ENCODE measurements at regions of chr1 and their contacts with region 1.

Region 1: DNA sequence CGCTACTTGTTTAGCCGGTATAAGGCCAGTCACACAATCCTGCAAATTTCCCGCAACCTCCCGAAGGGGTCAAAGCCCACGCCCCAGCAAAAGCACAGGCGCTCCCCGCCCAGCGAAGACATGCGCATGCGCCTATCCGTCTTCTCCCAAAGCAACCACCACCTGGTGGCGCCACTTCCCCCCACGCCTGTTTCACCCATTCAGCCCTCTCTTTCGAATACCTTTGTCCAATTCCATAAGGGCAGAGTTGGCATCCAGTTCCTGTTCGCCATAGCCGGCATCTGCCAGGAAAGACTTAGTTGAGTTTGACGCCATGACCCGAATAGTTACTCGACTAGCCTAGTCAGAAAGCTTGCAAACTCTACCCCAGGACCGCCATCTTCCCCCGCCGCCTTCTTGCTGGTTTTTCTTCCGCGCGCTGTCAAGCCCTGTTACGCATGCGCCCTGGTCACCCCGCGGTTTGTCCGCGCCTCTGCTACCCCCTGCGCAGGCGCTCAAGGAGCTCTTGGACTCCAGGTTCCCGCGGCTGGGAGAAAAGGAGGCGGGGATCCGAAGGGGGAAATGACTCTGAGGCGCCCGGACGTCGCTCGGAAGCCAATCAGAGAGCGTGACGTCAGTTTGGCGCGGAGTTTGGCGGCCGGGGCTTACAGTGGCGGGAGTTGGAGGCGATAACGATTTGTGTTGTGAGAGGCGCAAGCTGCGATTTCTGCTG is at the starts of genes DTL and INTS7:
- DNase-seq: peak; percentile 95 to 100 (median 98)
- ATAC-seq: peak; percentile 90
- H3K4me3 ChIP-seq: peak within 1 kb of the TSS; percentile 77 to 98
- H3K4me3 Mint-ChIP-seq: peak within 1 kb of the TSS; percentile 99
- H3K27ac ChIP-seq: peak within 1 kb of the TSS; percentile 75 to 82
- H3K27ac Mint-ChIP-seq: peak within 1 kb of the TSS; percentile 98
- H3K4me1 ChIP-seq: peaks cover 19% of the 10 kb centered on the region
- H3K4me1 Mint-ChIP-seq: peaks cover 47% of the 10 kb centered on the region
- H3K27me3 ChIP-seq: no peaks in the 10 kb centered on the region
- H3K27me3 Mint-ChIP-seq: no peaks in the 10 kb centered on the region
- CTCF ChIP-seq: peak; percentile 93
- total RNA-seq, gene DTL: 1.0 to 1.2 TPM
- total RNA-seq, gene INTS7: 2.4 to 3.3 TPM

Region 2: GRCh38 chr1:211183747-211184313 is 851.4 kb before region 1 on chr1:
- CTCF ChIA-PET with region 1: no interaction called
- POLR2A ChIA-PET with region 1: no interaction called
- intact Hi-C with region 1: no loop called
- DNase-seq: no peak
- ATAC-seq: no peak
- H3K4me3 ChIP-seq: no peak overlapping the region
- H3K4me3 Mint-ChIP-seq: no peak overlapping the region
- H3K27ac ChIP-seq: no peak overlapping the region
- H3K27ac Mint-ChIP-seq: no peak overlapping the region
- H3K4me1 ChIP-seq: no peaks in the 10 kb centered on the region
- H3K4me1 Mint-ChIP-seq: no peaks in the 10 kb centered on the region
- H3K27me3 ChIP-seq: no peaks in the 10 kb centered on the region
- H3K27me3 Mint-ChIP-seq: peaks cover 10% of the 10 kb centered on the region
- CTCF ChIP-seq: no peak

Region 3: GRCh38 chr1:211578640-211579433 is 456.4 kb before region 1 on chr1 and contains the start of gene SLC30A1:
- CTCF ChIA-PET with region 1: no interaction called
- POLR2A ChIA-PET with region 1: no interaction called
- intact Hi-C with region 1: loop called (anchors 1 to 5 kb)
- DNase-seq: peak; percentile 98 to 100 (median 99)
- ATAC-seq: peak; percentile 92
- H3K4me3 ChIP-seq: peak within 1 kb of the TSS; percentile 84 to 93
- H3K4me3 Mint-ChIP-seq: peak within 1 kb of the TSS; percentile 93
- H3K27ac ChIP-seq: peak within 1 kb of the TSS; percentile 56 to 59
- H3K27ac Mint-ChIP-seq: peak within 1 kb of the TSS; percentile 95
- H3K4me1 ChIP-seq: peaks cover 33% of the 10 kb centered on the region
- H3K4me1 Mint-ChIP-seq: peaks cover 51% of the 10 kb centered on the region
- H3K27me3 ChIP-seq: no peaks in the 10 kb centered on the region
- H3K27me3 Mint-ChIP-seq: no peaks in the 10 kb centered on the region
- CTCF ChIP-seq: no peak
- total RNA-seq, gene SLC30A1: 9.7 to 9.8 TPM

Region 4: GRCh38 chr1:211698161-211699026 is 336.9 kb before region 1 on chr1:
- CTCF ChIA-PET with region 1: interaction called, 21 read pairs
- POLR2A ChIA-PET with region 1: no interaction called
- intact Hi-C with region 1: no loop called
- DNase-seq: peak; percentile 70 to 90 (median 82)
- ATAC-seq: peak; percentile 96
- H3K4me3 ChIP-seq: peak overlapping the region; percentile 18 to 34
- H3K4me3 Mint-ChIP-seq: peak overlapping the region; percentile 76
- H3K27ac ChIP-seq: no peak overlapping the region
- H3K27ac Mint-ChIP-seq: no peak overlapping the region
- H3K4me1 ChIP-seq: peaks cover 30% of the 10 kb centered on the region
- H3K4me1 Mint-ChIP-seq: peaks cover 42% of the 10 kb centered on the region
- H3K27me3 ChIP-seq: no peaks in the 10 kb centered on the region
- H3K27me3 Mint-ChIP-seq: no peaks in the 10 kb centered on the region
- CTCF ChIP-seq: peak; percentile 99

Region 5: DNA sequence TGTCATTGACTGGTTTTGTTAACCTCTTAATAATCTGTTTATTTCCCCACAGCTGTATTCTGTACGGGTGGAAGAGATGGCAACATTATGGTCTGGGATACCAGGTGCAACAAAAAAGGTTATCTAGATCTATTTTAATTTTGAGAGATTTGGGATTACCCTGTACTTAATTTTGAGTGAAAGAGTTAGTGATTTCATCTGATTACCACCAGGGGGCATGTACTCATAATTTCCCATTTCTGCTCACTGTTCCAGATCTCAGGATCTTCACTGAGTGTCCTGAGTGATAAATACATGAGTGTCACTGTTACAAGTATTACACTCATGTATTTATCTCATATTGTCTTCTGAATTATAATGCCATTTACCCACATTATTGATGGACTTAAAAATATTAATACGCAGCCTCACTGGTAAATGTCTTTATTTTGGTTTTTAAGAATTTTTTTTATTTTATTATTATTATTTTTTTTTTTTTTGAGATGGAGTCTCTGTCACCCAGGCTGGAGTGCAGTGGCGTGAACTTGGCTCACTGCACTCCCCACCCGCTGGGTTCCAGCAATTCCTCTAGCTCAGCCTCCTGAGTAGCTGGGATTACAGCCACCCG is 27.7 kb after region 1 on chr1:
- CTCF ChIA-PET with region 1: interaction called, 15 read pairs
- POLR2A ChIA-PET with region 1: no interaction called
- intact Hi-C with region 1: no loop called
- DNase-seq: peak in 2 of 9 experiments; percentile 39 to 59
- ATAC-seq: peak; percentile 62
- H3K4me3 ChIP-seq: no peak overlapping the region
- H3K4me3 Mint-ChIP-seq: no peak overlapping the region
- H3K27ac ChIP-seq: no peak overlapping the region
- H3K27ac Mint-ChIP-seq: no peak overlapping the region
- H3K4me1 ChIP-seq: no peaks in the 10 kb centered on the region
- H3K4me1 Mint-ChIP-seq: no peaks in the 10 kb centered on the region
- H3K27me3 ChIP-seq: no peaks in the 10 kb centered on the region
- H3K27me3 Mint-ChIP-seq: no peaks in the 10 kb centered on the region
- CTCF ChIP-seq: peak; percentile 74

Region 6: GRCh38 chr1:212414328-212415106 is 379.2 kb after region 1 on chr1 and contains the start of gene PACC1:
- CTCF ChIA-PET with region 1: interaction called, 3 read pairs
- POLR2A ChIA-PET with region 1: interaction called, 3 read pairs
- intact Hi-C with region 1: loop called (anchors 1 kb)
- DNase-seq: peak; percentile 73 to 95 (median 86)
- ATAC-seq: peak; percentile 91
- H3K4me3 ChIP-seq: peak within 1 kb of the TSS; percentile 80 to 98
- H3K4me3 Mint-ChIP-seq: peak within 1 kb of the TSS; percentile 97
- H3K27ac ChIP-seq: peak within 1 kb of the TSS; percentile 59 to 67
- H3K27ac Mint-ChIP-seq: peak within 1 kb of the TSS; percentile 92
- H3K4me1 ChIP-seq: peaks cover 25% of the 10 kb centered on the region
- H3K4me1 Mint-ChIP-seq: peaks cover 40% of the 10 kb centered on the region
- H3K27me3 ChIP-seq: no peaks in the 10 kb centered on the region
- H3K27me3 Mint-ChIP-seq: no peaks in the 10 kb centered on the region
- CTCF ChIP-seq: no peak
- total RNA-seq, gene PACC1: 2.6 to 2.9 TPM

Region 7: DNA sequence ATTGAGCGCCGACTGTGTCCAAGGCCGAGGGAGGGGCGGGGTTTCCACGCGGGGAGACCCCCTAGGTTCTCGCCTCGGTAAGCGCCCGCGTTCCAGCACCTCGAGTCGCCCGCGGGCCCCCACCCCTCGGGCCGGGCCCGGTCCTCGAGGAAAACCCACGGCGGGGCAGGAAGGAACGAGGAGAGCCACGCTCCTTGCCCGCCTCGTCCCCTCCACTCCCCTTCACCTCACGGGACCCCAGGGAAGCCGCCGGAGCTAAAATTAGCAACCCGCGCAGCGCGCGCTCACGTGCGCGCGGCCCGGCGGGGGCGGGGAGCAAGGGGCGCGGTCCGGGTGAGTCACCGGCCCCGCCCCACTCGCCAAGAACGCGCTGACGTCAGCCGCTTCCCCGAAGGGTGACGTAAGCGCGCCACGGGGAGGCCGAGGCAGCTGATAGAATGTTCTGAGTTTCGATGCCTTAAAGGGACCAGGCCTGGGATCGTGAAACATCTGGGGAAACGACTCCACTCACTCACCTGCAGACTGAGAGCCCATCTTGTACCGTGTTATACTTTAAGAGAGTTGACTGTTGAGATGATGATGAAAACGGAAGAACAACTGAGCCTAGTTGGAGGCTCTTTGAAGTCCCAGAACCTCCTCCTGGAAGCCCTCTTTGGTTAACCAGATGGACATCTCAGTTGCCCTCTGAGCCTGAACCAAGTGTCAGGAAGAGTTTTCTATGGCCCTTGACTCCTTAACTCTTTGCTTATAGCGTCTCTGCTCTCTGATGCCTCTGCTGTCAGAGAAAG is 523.6 kb after region 1 on chr1:
- CTCF ChIA-PET with region 1: no interaction called
- POLR2A ChIA-PET with region 1: no interaction called
- intact Hi-C with region 1: loop called in 1 of 2 experiments (anchors 5 kb)
- DNase-seq: peak; percentile 83 to 97 (median 92)
- ATAC-seq: peak; percentile 96
- H3K4me3 ChIP-seq: peak overlapping the region; percentile 45 to 82
- H3K4me3 Mint-ChIP-seq: peak overlapping the region; percentile 85
- H3K27ac ChIP-seq: peak overlapping the region; percentile 76 to 95
- H3K27ac Mint-ChIP-seq: peak overlapping the region; percentile 94
- H3K4me1 ChIP-seq: peaks cover 5% of the 10 kb centered on the region
- H3K4me1 Mint-ChIP-seq: peaks cover 10% of the 10 kb centered on the region
- H3K27me3 ChIP-seq: peaks cover 0 to 3% of the 10 kb centered on the region in 2 experiments
- H3K27me3 Mint-ChIP-seq: no peaks in the 10 kb centered on the region
- CTCF ChIP-seq: no peak

Region 8: GRCh38 chr1:212857992-212858460 is 822.7 kb after region 1 on chr1 and contains the start of gene FLVCR1:
- CTCF ChIA-PET with region 1: no interaction called
- POLR2A ChIA-PET with region 1: no interaction called
- intact Hi-C with region 1: loop called in 1 of 2 experiments (anchors 1 kb)
- DNase-seq: peak; percentile 72 to 95 (median 87)
- ATAC-seq: peak; percentile 95
- H3K4me3 ChIP-seq: peak within 1 kb of the TSS; percentile 82 to 89
- H3K4me3 Mint-ChIP-seq: peak within 1 kb of the TSS; percentile 96
- H3K27ac ChIP-seq: peak within 1 kb of the TSS; percentile 64
- H3K27ac Mint-ChIP-seq: peak within 1 kb of the TSS; percentile 91
- H3K4me1 ChIP-seq: peaks cover 24% of the 10 kb centered on the region
- H3K4me1 Mint-ChIP-seq: peaks cover 21% of the 10 kb centered on the region
- H3K27me3 ChIP-seq: no peaks in the 10 kb centered on the region
- H3K27me3 Mint-ChIP-seq: no peaks in the 10 kb centered on the region
- CTCF ChIP-seq: no peak
- total RNA-seq, gene FLVCR1: 6.5 to 6.6 TPM

Measured in CD8-positive, alpha-beta T cell (primary cell).